Spleen (tissue), 13 donors: ENCODE measurements at regions of chr16 and their contacts with region 1.

Region 1: GRCh38 chr16:72397876-72398275 is 225.9 kb upstream of the PMFBP1 start:
- DNase-seq: no peak
- H3K4me3 ChIP-seq: no peak overlapping the region
- H3K27ac ChIP-seq: no peak overlapping the region
- H3K4me1 ChIP-seq: no peaks in the 10 kb centered on the region
- H3K27me3 ChIP-seq: no peaks in the 10 kb centered on the region
- CTCF ChIP-seq: no peak
- POLR2A ChIP-seq: no peak

Region 2: DNA sequence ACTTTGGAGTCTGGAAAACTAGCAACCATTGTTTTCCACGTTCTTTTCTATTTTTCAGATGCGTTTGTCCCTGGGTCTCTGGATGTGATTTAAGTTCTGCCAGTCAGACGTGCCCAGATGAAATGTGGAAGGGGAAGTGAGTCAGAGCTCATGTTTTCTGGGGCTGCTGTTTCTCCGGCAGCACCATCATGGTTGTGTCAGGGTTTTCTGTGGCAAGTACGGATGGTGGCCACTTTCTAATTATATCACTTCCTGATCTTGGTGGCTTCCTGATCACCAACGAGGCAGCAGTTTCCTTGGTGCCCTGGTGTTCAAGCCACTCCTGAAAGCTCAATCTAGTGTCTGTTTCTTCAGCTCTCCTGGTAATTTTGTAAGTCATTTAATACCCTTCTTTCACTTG is 194.5 kb before region 1 on chr16:
- intact Hi-C with region 1: no loop called
- DNase-seq: no peak
- H3K4me3 ChIP-seq: peak overlapping the region in 1 of 8 donors; percentile 47
- H3K27ac ChIP-seq: peak overlapping the region in 7 of 8 donors; percentile 51 to 88 (median 81)
- H3K4me1 ChIP-seq: peaks cover 0 to 27% (median 14%) of the 10 kb centered on the region in 6 donors
- H3K27me3 ChIP-seq: peaks cover 0 to 4% (median 0%) of the 10 kb centered on the region in 7 donors
- CTCF ChIP-seq: no peak
- POLR2A ChIP-seq: no peak

Region 3: DNA sequence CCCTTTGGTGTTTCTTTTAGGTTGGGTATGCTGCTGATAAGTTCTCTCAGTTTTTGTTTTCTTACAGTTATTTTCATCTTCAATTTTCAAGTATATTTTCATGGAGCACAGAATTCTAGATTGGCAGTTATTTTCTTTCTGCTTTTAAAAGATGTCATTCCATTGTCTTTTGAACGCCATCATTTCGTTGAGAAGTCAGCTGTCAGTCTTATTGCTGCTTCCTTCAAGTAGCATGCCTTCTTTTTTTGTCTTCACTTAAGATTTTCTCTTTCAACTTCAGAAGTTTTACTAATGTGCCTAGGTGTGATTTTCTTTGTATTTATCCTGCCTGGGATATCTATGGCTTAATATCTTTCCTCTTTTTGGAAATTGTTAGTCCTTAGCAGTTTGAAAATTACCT is 36.3 kb after region 1 on chr16:
- intact Hi-C with region 1: no loop called
- DNase-seq: no peak
- H3K4me3 ChIP-seq: no peak overlapping the region
- H3K27ac ChIP-seq: no peak overlapping the region
- H3K4me1 ChIP-seq: no peaks in the 10 kb centered on the region
- H3K27me3 ChIP-seq: no peaks in the 10 kb centered on the region
- CTCF ChIP-seq: no peak
- POLR2A ChIP-seq: no peak

Region 4: DNA sequence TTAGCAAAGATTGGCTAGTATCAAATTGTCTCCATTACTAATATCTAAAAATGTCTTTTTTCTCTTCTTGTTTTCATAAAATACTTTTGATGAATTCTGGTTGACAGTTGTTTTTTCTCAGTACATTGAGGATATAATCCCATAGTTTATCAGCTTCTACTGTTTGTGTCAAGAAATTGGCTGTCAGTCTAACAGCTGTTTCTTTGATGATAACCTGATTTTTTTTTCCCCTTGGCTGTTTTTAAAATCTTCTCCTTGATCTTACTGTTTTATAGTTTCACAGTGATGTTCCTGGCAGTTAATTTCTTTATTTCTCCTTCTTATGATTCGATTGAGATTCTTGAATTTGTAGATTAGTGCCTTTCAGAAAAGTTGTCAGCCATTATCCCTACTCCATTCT is 89.4 kb after region 1 on chr16:
- intact Hi-C with region 1: no loop called
- DNase-seq: no peak
- H3K4me3 ChIP-seq: no peak overlapping the region
- H3K27ac ChIP-seq: no peak overlapping the region
- H3K4me1 ChIP-seq: peaks cover 0 to under 1% (median 0%) of the 10 kb centered on the region in 6 donors
- H3K27me3 ChIP-seq: no peaks in the 10 kb centered on the region
- CTCF ChIP-seq: no peak
- POLR2A ChIP-seq: no peak

Region 5: DNA sequence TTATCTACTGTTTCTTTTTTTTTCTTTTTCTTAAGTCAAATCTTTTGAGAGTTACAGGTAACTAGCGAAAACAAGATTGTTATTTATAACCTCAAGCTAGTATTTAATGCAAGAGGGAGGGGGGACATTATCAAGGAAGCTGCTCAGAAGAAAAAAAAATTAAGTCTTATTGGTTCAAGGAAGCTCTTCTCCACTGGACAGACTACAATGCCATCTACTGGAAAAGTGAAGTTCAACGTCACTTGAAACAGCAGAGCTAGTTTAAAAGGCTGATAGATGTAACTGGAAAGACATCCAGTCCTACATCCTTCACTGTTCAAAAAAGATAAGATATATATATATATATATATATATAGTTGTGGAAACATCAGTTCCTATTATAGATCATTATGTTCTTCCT is 1480.7 kb after region 1 on chr16:
- intact Hi-C with region 1: loop called (anchors 10 kb)
- DNase-seq: no peak
- H3K4me3 ChIP-seq: no peak overlapping the region
- H3K27ac ChIP-seq: no peak overlapping the region
- H3K4me1 ChIP-seq: peaks cover 0 to 3% (median 0%) of the 10 kb centered on the region in 6 donors
- H3K27me3 ChIP-seq: peaks cover 0 to 9% (median 0%) of the 10 kb centered on the region in 7 donors
- CTCF ChIP-seq: peak in 7 of 11 experiments; percentile 14 to 47 (median 23)
- POLR2A ChIP-seq: no peak

Region 6: GRCh38 chr16:74107795-74108618 is 1710.1 kb after region 1 on chr16:
- intact Hi-C with region 1: no loop called
- DNase-seq: no peak
- H3K4me3 ChIP-seq: peak overlapping the region in 1 of 8 donors; percentile 33
- H3K27ac ChIP-seq: no peak overlapping the region
- H3K4me1 ChIP-seq: peaks cover 0 to 8% (median 0%) of the 10 kb centered on the region in 6 donors
- H3K27me3 ChIP-seq: no peaks in the 10 kb centered on the region
- CTCF ChIP-seq: peak in 8 of 11 experiments; percentile 16 to 50 (median 36)
- POLR2A ChIP-seq: no peak